ENCODE measurements at regions of chr6 and their contacts with region 1.

Region 1: GRCh38 chr6:128807577-128807976 is 75.4 kb upstream of the LAMA2 start:
- DNase-seq: no peak
- ATAC-seq: peak in 2 of 4 donors; percentile 23 to 25
- H3K4me3 ChIP-seq: no peak overlapping the region
- H3K27ac ChIP-seq: peak overlapping the region in 1 of 12 donors; percentile 6
- H3K4me1 ChIP-seq: peaks cover 0 to 16% (median 3%) of the 10 kb centered on the region in 12 donors
- H3K27me3 ChIP-seq: no peaks in the 10 kb centered on the region
- CTCF ChIP-seq: peak; percentile 15 to 65 (median 48)
- POLR2A ChIP-seq: no peak

Region 2: DNA sequence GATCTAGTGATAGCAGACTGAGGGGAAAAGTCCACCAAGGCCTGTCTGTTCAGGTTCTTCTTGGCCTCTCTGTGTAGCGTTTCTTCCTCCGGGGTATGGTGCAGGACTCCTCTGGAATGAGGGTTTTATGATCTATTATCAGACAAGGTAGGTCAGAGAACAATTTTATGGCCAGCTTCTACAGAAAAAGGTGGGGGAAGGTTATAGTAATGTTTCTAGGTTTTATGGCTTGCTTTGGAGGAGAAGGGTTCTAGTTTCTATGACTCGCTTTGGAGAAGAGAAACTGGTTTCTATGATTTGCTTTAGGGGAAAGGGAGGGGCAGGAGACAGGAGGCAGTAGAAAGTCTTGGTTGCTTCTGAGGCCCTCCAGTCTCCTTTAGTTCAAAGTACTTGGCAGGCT is 69.5 kb before region 1 on chr6:
- intact Hi-C with region 1: no loop called
- DNase-seq: no peak
- ATAC-seq: no peak
- H3K4me3 ChIP-seq: no peak overlapping the region
- H3K27ac ChIP-seq: no peak overlapping the region
- H3K4me1 ChIP-seq: no peaks in the 10 kb centered on the region
- H3K27me3 ChIP-seq: no peaks in the 10 kb centered on the region
- CTCF ChIP-seq: no peak
- POLR2A ChIP-seq: no peak

Region 3: DNA sequence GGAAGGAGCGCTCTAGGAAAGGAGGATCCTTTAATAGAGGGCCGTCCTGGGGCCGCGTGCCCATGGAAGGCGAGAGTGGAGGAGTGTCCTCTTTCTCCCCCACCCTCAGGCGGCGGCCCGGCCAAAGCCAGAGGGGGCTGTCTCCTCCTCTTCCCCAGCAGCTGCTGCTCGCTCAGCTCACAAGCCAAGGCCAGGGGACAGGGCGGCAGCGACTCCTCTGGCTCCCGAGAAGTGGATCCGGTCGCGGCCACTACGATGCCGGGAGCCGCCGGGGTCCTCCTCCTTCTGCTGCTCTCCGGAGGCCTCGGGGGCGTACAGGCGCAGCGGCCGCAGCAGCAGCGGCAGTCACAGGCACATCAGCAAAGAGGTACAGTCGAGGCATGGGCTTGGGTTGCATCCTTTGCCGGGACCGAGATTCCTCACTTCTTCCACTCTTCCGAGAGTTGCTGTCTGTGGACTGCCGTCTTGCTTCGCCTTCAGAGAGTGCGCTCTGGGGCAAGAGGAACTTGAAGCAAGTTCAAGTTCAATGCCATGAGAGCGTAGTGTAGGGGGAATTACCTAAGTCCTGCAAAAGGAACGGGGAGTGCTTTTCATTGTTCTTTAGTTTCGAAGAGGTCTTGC is 75.5 kb after region 1 on chr6 and contains the start of gene LAMA2:
- intact Hi-C with region 1: loop called in 2 of 10 experiments (anchors 5 kb)
- DNase-seq: peak; percentile 89 to 94 (median 90)
- ATAC-seq: peak; percentile 98 to 99 (median 98)
- H3K4me3 ChIP-seq: peak within 1 kb of the TSS; percentile 35 to 82 (median 67)
- H3K27ac ChIP-seq: peak within 1 kb of the TSS; percentile 76 to 96 (median 90)
- H3K4me1 ChIP-seq: peaks cover 0 to 21% (median 6%) of the 10 kb centered on the region in 12 donors
- H3K27me3 ChIP-seq: no peaks in the 10 kb centered on the region
- CTCF ChIP-seq: peak in 10 of 12 donors; percentile 8 to 63 (median 42)
- POLR2A ChIP-seq: peak; percentile 45 to 97
- total RNA-seq, gene LAMA2: 156 to 299 (median 207) TPM

Region 4: DNA sequence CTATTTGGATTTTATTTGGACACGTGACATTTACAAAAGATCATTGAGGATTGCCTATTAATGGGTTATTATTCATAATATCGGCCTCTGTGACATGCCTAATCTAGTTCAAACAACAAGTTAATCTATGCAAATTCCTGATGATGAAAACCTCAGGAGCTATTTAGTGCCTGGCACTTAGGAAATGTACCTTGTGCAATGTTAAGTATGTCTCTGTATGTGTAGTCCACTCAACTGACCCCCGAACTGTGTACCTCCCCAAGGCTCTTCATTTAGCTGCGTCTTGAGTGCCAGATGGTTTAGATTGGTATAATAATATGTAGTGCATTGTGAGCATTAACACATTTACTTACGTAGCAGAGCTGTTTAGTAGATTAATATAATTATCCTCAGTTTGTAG is 82.3 kb after region 1 on chr6:
- intact Hi-C with region 1: loop called in 1 of 10 experiments (anchors 5 kb)
- DNase-seq: no peak
- ATAC-seq: peak in 3 of 4 donors; percentile 20 to 68 (median 47)
- H3K4me3 ChIP-seq: peak overlapping the region in 11 of 12 donors; percentile 2 to 76 (median 65)
- H3K27ac ChIP-seq: peak overlapping the region; percentile 18 to 96 (median 82)
- H3K4me1 ChIP-seq: peaks cover 0 to 41% (median 0%) of the 10 kb centered on the region in 12 donors
- H3K27me3 ChIP-seq: no peaks in the 10 kb centered on the region
- CTCF ChIP-seq: no peak
- POLR2A ChIP-seq: no peak

Region 5: DNA sequence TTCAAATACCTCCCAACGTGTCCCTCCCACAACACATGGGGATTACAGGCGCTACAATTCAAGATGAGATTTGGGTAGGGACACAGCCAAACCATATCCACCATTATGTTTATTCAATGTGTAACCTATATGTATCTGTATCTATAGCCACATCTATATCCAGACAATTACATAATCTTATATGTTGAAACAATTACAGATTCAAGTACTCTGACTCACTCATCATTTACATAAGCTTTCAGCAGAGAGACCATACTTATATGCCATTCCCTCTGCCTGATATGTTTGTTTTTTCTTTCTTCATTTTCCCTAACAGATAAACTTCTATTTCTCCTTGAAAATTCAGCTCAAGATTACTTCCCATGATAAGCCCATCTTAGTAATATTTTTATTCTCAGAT is 238.9 kb after region 1 on chr6:
- intact Hi-C with region 1: loop called in 1 of 10 experiments (anchors 10 kb)
- DNase-seq: no peak
- ATAC-seq: no peak
- H3K4me3 ChIP-seq: no peak overlapping the region
- H3K27ac ChIP-seq: no peak overlapping the region
- H3K4me1 ChIP-seq: peaks cover 0 to 46% (median 7%) of the 10 kb centered on the region in 12 donors
- H3K27me3 ChIP-seq: no peaks in the 10 kb centered on the region
- CTCF ChIP-seq: no peak
- POLR2A ChIP-seq: no peak

Region 6: DNA sequence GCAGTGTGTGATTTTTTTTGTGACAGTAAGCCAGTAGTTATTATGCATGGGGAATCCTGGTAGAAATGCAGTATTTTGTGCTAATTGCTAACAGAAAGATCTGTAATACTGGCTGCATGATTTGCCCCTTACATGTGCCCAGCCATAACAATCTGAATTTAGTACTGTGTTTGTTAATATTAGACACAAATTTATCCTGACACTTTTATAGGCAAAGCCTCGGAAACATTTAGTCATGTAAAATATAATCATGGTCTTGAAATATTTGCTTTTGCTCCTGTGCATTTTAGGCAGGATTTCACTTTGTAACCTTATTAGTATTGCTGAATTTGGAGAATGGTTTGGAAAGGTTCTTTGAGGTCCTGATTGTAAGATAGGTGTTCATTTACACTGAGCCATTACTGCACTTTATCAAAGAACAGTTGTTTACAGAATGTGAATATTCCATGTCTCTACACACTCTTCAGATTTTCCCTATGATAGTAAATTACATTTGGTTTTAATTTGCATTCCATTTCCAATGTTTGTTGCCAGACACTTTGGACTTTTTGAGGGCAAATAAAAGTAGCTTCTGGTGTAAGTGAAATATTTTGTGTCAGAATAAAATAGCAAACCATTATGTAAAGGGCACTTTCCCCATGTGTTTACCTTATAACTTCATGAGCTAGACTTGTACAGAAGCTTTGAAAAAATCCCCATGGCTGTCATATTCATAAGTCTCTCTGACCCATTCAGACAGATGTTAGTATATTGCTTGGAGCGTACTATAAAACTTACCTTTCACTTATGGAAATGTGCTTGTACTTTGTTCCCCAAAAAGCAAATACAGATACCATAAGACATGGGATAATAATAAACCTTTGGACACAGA is 552.5 kb after region 1 on chr6:
- intact Hi-C with region 1: loop called in 1 of 10 experiments (anchors 10 kb)
- DNase-seq: no peak
- ATAC-seq: no peak
- H3K4me3 ChIP-seq: no peak overlapping the region
- H3K27ac ChIP-seq: no peak overlapping the region
- H3K4me1 ChIP-seq: peaks cover 0 to 27% (median 10%) of the 10 kb centered on the region in 12 donors
- H3K27me3 ChIP-seq: no peaks in the 10 kb centered on the region
- CTCF ChIP-seq: no peak
- POLR2A ChIP-seq: no peak

Region 7: DNA sequence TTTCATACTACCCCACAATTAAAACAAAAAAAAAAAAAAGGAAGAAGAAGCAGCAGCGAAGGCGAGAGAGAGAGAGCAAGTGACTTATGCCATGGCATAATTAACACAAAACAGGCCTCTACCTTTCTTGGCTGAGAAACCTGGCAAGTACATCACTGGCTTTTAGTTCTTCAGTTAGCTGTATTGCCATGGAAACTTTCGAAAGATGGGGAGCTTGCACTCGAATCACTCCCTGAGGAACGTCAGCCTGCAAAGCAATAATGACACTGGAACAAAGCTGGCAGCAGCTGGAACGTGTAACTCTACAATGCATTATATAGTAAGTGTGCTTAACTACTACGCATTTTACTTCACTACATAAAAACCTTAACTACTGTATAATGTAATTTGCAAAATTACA is 776.3 kb after region 1 on chr6:
- intact Hi-C with region 1: no loop called
- DNase-seq: no peak
- ATAC-seq: no peak
- H3K4me3 ChIP-seq: no peak overlapping the region
- H3K27ac ChIP-seq: no peak overlapping the region
- H3K4me1 ChIP-seq: no peaks in the 10 kb centered on the region
- H3K27me3 ChIP-seq: no peaks in the 10 kb centered on the region
- CTCF ChIP-seq: no peak
- POLR2A ChIP-seq: no peak

Measured in heart left ventricle (tissue), 16 donors.